Panc1 (cell line): ENCODE measurements at regions of chr11 and their contacts with region 1.

Region 1: DNA sequence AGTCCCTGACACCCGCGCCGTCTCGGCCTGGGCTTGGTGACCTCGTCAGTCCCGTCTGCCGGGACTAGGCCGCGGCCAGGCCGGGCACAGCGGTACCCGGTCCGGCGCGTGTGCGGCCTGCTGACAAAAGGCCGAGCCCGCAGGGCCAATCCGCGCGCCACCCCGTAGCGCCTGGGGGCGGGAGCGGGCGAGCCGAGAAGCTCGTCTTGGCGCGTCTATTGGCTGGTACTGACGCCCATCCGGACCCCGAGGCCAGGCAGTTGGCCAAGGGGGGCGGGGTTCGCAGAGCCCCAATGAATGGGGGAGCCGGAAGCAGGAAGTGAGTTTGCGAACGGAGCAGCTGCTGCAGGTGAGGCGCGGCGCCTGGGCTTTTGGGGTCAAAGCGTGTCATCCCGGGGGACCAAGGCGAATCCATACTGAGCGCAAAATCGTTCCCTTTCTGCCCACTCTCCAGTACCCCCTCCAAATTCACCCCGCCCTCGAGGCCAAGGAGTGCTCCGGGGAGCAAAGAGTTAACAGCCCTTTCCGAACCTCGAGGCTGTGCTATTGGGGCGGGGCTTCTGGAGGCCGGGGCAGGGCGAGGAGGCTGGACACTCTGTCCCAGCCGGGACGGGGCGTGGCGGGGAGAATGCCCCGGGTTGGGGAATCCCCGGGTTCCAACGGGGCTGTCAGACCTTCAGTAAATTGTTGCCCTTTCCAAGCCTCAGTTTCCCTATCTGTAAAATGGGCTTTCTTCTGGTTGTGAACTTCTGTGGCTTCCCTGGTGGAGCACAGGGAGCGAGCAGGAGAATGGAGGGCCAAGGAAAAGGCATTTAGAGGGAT is at the start of gene DPP3:
- DNase-seq: peak; percentile 90
- ATAC-seq: peak; percentile 95
- H3K4me3 ChIP-seq: peak within 1 kb of the TSS; percentile 77 to 90
- H3K27ac ChIP-seq: peak within 1 kb of the TSS; percentile 95
- H3K4me1 ChIP-seq: peaks cover 4% of the 10 kb centered on the region
- H3K27me3 ChIP-seq: no peaks in the 10 kb centered on the region
- CTCF ChIP-seq: no peak
- total RNA-seq, gene DPP3: 180 TPM

Region 2: GRCh38 chr11:66466225-66467027 is 13.9 kb before region 1 on chr11 and contains the start of gene PELI3:
- CTCF ChIA-PET with region 1: interaction called, 10 read pairs
- POLR2A ChIA-PET with region 1: interaction called, 11 read pairs
- in situ Hi-C with region 1: no loop called
- intact Hi-C with region 1: no loop called
- DNase-seq: no peak
- ATAC-seq: peak; percentile 97
- H3K4me3 ChIP-seq: peak within 1 kb of the TSS; percentile 70 to 82
- H3K27ac ChIP-seq: peak within 1 kb of the TSS; percentile 77
- H3K4me1 ChIP-seq: peaks cover 11% of the 10 kb centered on the region
- H3K27me3 ChIP-seq: no peaks in the 10 kb centered on the region
- CTCF ChIP-seq: no peak
- total RNA-seq, gene PELI3: 9.1 TPM

Region 3: DNA sequence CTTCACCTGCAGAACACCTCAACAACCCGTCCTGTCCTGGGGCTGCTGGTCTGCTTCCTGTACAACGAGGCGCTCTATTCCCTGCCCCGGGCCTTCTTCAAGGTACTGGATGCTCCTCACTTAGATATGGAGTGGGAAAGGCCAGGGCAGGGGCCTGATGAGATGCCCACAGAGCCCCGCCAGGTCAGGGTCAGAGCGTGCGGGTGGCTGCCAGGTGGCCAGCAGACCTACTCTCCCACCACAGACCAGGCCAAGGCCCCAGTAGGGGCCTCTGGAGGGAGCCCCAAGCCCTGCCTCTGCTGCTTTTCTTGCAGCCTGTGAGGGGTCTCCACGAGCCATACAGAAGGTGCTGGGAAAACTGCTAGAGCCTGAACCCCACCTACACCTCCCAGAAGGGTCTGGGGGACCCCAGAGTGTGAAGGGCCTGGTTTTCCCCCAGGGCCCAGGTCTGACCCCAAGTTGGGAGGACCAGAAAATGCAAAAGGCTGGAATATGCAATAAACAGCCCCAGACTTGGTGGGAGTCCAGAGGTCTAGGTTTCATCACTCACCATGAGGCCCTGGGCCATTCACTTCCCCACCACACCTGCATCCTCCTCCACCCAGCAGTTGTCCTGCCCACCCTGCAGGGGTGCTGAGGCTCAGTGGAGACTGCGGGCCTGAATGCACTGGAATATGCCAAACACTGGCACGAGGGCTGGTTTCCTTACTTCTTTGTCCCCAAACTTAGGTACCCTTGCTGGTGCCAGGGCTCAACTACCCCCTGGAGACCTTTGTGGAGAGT is 50.8 kb after region 1 on chr11:
- CTCF ChIA-PET with region 1: no interaction called
- POLR2A ChIA-PET with region 1: interaction called, 12 read pairs
- in situ Hi-C with region 1: no loop called
- intact Hi-C with region 1: no loop called
- DNase-seq: no peak
- ATAC-seq: peak; percentile 5; the same call in 1 of the 2 replicates
- H3K4me3 ChIP-seq: no peak overlapping the region
- H3K27ac ChIP-seq: no peak overlapping the region
- H3K4me1 ChIP-seq: no peaks in the 10 kb centered on the region
- H3K27me3 ChIP-seq: no peaks in the 10 kb centered on the region
- CTCF ChIP-seq: no peak

Region 4: DNA sequence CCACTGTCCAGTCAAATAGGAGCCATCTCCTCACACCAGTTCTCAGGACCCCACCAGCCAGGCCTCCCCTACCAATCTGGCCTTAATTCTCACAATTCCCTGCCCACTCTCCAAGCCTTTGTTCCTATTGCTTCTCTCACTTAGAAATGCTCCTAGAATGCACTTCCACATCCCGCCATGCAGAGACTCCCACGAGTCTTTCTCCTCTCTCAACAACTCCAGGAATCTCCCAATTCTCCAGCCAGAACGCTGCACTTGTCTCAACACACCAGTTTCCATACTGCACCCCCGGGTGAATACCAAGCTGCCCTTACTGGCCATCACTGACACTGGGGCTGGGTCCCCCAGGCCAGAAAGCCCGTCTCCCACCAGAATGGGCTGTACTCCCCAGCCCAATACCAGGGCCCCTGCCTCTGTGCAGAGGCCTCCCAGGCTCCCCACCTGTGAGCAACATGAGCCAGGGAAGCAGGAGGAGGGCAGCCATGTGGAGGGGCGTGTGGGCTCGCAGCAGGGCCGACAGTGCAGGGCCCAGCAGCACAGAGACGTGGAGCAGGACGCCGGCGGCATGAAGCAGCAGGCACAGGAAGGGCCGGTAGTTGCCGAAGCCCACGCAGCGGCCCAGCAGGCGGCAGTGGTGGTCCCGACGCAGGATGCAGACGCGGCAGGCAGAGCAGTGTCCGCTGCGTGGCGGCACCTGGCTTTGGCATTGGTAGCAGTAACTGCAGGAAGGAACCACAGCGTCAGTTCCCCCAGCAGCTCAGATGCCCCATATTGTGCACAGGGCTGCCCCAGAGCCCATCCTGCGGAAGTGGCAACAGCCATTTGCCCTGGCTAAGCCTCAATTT is 63.2 kb after region 1 on chr11:
- CTCF ChIA-PET with region 1: no interaction called
- POLR2A ChIA-PET with region 1: no interaction called
- in situ Hi-C with region 1: no loop called
- intact Hi-C with region 1: no loop called
- DNase-seq: no peak
- ATAC-seq: no peak
- H3K4me3 ChIP-seq: no peak overlapping the region
- H3K27ac ChIP-seq: no peak overlapping the region
- H3K4me1 ChIP-seq: peaks cover 9% of the 10 kb centered on the region
- H3K27me3 ChIP-seq: no peaks in the 10 kb centered on the region
- CTCF ChIP-seq: no peak

Region 5: GRCh38 chr11:66591175-66591574 is 110.8 kb after region 1 on chr11:
- CTCF ChIA-PET with region 1: interaction called, 18 read pairs
- POLR2A ChIA-PET with region 1: no interaction called
- in situ Hi-C with region 1: no loop called
- intact Hi-C with region 1: no loop called
- DNase-seq: no peak
- ATAC-seq: no peak
- H3K4me3 ChIP-seq: no peak overlapping the region
- H3K27ac ChIP-seq: no peak overlapping the region
- H3K4me1 ChIP-seq: peaks cover 8% of the 10 kb centered on the region
- H3K27me3 ChIP-seq: no peaks in the 10 kb centered on the region
- CTCF ChIP-seq: no peak